ENCODE measurements at regions of chr15 and their contacts with region 1.

Region 1: DNA sequence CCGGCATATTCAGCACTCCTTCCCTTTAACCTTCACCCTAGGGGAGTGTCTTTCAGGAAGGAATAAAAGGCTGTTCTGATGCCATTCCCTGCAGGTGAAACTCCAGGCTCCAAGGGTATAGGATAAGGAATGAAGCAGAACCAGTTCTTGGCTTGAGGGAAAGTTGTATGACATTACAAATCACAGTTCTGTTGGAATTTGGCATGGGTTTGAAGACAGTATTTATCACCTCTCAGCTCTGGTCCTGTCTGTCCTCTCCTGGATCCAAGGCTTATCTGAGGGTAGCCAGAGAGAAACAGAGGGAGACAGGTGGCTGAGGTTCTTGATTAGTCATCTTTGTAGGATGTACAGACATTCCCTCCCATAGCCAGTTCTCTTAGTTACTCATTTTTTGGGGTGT is 37.1 kb downstream of the RAB11A start:
- DNase-seq: no peak
- ATAC-seq: no peak
- H3K4me3 ChIP-seq: no peak overlapping the region
- H3K4me3 Mint-ChIP-seq: no peak overlapping the region
- H3K27ac ChIP-seq: no peak overlapping the region
- H3K27ac Mint-ChIP-seq: no peak overlapping the region
- H3K4me1 ChIP-seq: no peaks in the 10 kb centered on the region
- H3K4me1 Mint-ChIP-seq: peaks cover 5 to 10% (median 8%) of the 10 kb centered on the region in 3 donors
- H3K27me3 ChIP-seq: no peaks in the 10 kb centered on the region
- H3K27me3 Mint-ChIP-seq: no peaks in the 10 kb centered on the region

Region 2: GRCh38 chr15:64997745-64998375 is 908.5 kb before region 1 on chr15:
- CTCF ChIA-PET with region 1: no interaction called
- POLR2A ChIA-PET with region 1: interaction called in 1 of 2 experiments, 12 read pairs
- DNase-seq: no peak
- ATAC-seq: no peak
- H3K4me3 ChIP-seq: no peak overlapping the region
- H3K4me3 Mint-ChIP-seq: no peak overlapping the region
- H3K27ac ChIP-seq: no peak overlapping the region
- H3K27ac Mint-ChIP-seq: no peak overlapping the region
- H3K4me1 ChIP-seq: no peaks in the 10 kb centered on the region
- H3K4me1 Mint-ChIP-seq: peaks cover 0 to 3% (median 3%) of the 10 kb centered on the region in 3 donors
- H3K27me3 ChIP-seq: no peaks in the 10 kb centered on the region
- H3K27me3 Mint-ChIP-seq: no peaks in the 10 kb centered on the region

Region 3: GRCh38 chr15:65245096-65245856 is 661.1 kb before region 1 on chr15:
- CTCF ChIA-PET with region 1: no interaction called
- POLR2A ChIA-PET with region 1: interaction called in 1 of 2 experiments, 19 read pairs
- DNase-seq: no peak
- ATAC-seq: no peak
- H3K4me3 ChIP-seq: no peak overlapping the region
- H3K4me3 Mint-ChIP-seq: no peak overlapping the region
- H3K27ac ChIP-seq: no peak overlapping the region
- H3K27ac Mint-ChIP-seq: no peak overlapping the region
- H3K4me1 ChIP-seq: peaks cover 0 to 4% of the 10 kb centered on the region in 2 experiments
- H3K4me1 Mint-ChIP-seq: peaks cover 0 to 3% (median 2%) of the 10 kb centered on the region in 3 donors
- H3K27me3 ChIP-seq: no peaks in the 10 kb centered on the region
- H3K27me3 Mint-ChIP-seq: no peaks in the 10 kb centered on the region